ENCODE measurements at regions of chr5 and their contacts with region 1.

Region 1: GRCh38 chr5:17216176-17216973 is 1.1 kb upstream of the BASP1 start:
- DNase-seq: peak; percentile 69
- ATAC-seq: peak; percentile 41
- H3K4me3 Mint-ChIP-seq: peak overlapping the region; percentile 94
- H3K27ac Mint-ChIP-seq: peak overlapping the region; percentile 97
- H3K4me1 Mint-ChIP-seq: peaks cover 59% of the 10 kb centered on the region
- H3K27me3 Mint-ChIP-seq: no peaks in the 10 kb centered on the region
- CTCF ChIP-seq: peak; percentile 65

Region 2: DNA sequence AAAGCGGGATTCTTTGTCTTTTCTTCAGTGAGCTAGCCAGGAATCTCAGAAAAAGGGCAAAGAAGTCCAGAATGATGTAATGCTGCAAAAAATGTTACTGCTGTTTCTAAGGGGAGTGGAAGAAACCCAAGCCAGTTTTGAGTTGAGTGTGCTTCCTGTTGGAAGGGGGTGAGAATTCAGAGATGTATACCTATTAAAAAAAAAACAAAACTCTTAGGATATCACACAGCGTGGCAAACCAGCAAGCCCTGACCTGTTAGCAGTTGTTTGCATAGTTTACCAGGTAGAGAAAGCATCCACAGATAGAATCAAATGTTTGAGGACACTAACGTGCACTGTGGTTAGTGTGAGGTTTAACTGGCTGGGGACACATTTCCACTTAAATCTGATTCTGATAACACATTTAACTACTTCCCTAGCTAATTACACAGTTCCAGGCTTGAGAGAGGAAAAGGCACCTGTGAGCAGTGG is 12.5 kb after region 1 on chr5:
- CTCF ChIA-PET with region 1: interaction called, 13 read pairs
- POLR2A ChIA-PET with region 1: interaction called, 28 read pairs
- intact Hi-C with region 1: loop called (anchors 1 kb)
- DNase-seq: no peak
- ATAC-seq: peak; percentile 13
- H3K4me3 Mint-ChIP-seq: peak overlapping the region; percentile 63
- H3K27ac Mint-ChIP-seq: peak overlapping the region; percentile 92
- H3K4me1 Mint-ChIP-seq: peaks cover 92% of the 10 kb centered on the region
- H3K27me3 Mint-ChIP-seq: no peaks in the 10 kb centered on the region
- CTCF ChIP-seq: no peak

Region 3: GRCh38 chr5:17316970-17317459 is 100.6 kb after region 1 on chr5:
- CTCF ChIA-PET with region 1: interaction called, 10 read pairs
- POLR2A ChIA-PET with region 1: interaction called, 77 read pairs
- intact Hi-C with region 1: loop called (anchors 1 kb)
- DNase-seq: no peak
- ATAC-seq: peak; percentile 68
- H3K4me3 Mint-ChIP-seq: peak overlapping the region; percentile 82
- H3K27ac Mint-ChIP-seq: peak overlapping the region; percentile 92
- H3K4me1 Mint-ChIP-seq: peaks cover 62% of the 10 kb centered on the region
- H3K27me3 Mint-ChIP-seq: no peaks in the 10 kb centered on the region
- CTCF ChIP-seq: no peak

Region 4: GRCh38 chr5:17620627-17621026 is 404.3 kb after region 1 on chr5:
- CTCF ChIA-PET with region 1: no interaction called
- POLR2A ChIA-PET with region 1: no interaction called
- intact Hi-C with region 1: loop called (anchors 5 kb)
- DNase-seq: no peak
- ATAC-seq: no peak
- H3K4me3 Mint-ChIP-seq: no peak overlapping the region
- H3K27ac Mint-ChIP-seq: no peak overlapping the region
- H3K4me1 Mint-ChIP-seq: no peaks in the 10 kb centered on the region
- H3K27me3 Mint-ChIP-seq: no peaks in the 10 kb centered on the region
- CTCF ChIP-seq: no peak

Region 5: GRCh38 chr5:17991775-17992174 is 775.4 kb after region 1 on chr5:
- CTCF ChIA-PET with region 1: interaction called, 3 read pairs
- POLR2A ChIA-PET with region 1: no interaction called
- intact Hi-C with region 1: loop called (anchors 10 kb)
- DNase-seq: no peak
- ATAC-seq: no peak
- H3K4me3 Mint-ChIP-seq: no peak overlapping the region
- H3K27ac Mint-ChIP-seq: no peak overlapping the region
- H3K4me1 Mint-ChIP-seq: no peaks in the 10 kb centered on the region
- H3K27me3 Mint-ChIP-seq: no peaks in the 10 kb centered on the region
- CTCF ChIP-seq: no peak

Region 6: GRCh38 chr5:18305297-18305924 is 1089.0 kb after region 1 on chr5:
- CTCF ChIA-PET with region 1: interaction called, 128 read pairs
- POLR2A ChIA-PET with region 1: interaction called, 31 read pairs
- intact Hi-C with region 1: loop called (anchors 1 kb)
- DNase-seq: no peak
- ATAC-seq: peak; percentile 70
- H3K4me3 Mint-ChIP-seq: no peak overlapping the region
- H3K27ac Mint-ChIP-seq: no peak overlapping the region
- H3K4me1 Mint-ChIP-seq: no peaks in the 10 kb centered on the region
- H3K27me3 Mint-ChIP-seq: peaks cover 5% of the 10 kb centered on the region
- CTCF ChIP-seq: no peak

Measured in activated B cell treated with CpG ODN at 0.5 μM for 24 hours (primary cell).